Naive thymus-derived CD4-positive, alpha-beta T cell (primary cell): ENCODE measurements at regions of chr3 and their contacts with region 1.

Region 1: GRCh38 chr3:100260685-100261484 is at the start of gene TBC1D23:
- DNase-seq: peak; percentile 89 to 98 (median 96)
- ATAC-seq: peak; percentile 99
- H3K4me3 ChIP-seq: peak within 1 kb of the TSS; percentile 92
- H3K4me3 Mint-ChIP-seq: peak within 1 kb of the TSS; percentile 90 to 100 (median 94)
- H3K27ac ChIP-seq: peak within 1 kb of the TSS; percentile 89
- H3K27ac Mint-ChIP-seq: peak within 1 kb of the TSS; percentile 97 to 100 (median 99)
- H3K4me1 ChIP-seq: peaks cover 10 to 20% of the 10 kb centered on the region in 2 donors
- H3K4me1 Mint-ChIP-seq: peaks cover 37 to 75% (median 65%) of the 10 kb centered on the region in 7 donors
- H3K27me3 ChIP-seq: no peaks in the 10 kb centered on the region
- H3K27me3 Mint-ChIP-seq: no peaks in the 10 kb centered on the region
- total RNA-seq, gene TBC1D23: 30.8 to 42.4 (median 33.9) TPM

Region 2: DNA sequence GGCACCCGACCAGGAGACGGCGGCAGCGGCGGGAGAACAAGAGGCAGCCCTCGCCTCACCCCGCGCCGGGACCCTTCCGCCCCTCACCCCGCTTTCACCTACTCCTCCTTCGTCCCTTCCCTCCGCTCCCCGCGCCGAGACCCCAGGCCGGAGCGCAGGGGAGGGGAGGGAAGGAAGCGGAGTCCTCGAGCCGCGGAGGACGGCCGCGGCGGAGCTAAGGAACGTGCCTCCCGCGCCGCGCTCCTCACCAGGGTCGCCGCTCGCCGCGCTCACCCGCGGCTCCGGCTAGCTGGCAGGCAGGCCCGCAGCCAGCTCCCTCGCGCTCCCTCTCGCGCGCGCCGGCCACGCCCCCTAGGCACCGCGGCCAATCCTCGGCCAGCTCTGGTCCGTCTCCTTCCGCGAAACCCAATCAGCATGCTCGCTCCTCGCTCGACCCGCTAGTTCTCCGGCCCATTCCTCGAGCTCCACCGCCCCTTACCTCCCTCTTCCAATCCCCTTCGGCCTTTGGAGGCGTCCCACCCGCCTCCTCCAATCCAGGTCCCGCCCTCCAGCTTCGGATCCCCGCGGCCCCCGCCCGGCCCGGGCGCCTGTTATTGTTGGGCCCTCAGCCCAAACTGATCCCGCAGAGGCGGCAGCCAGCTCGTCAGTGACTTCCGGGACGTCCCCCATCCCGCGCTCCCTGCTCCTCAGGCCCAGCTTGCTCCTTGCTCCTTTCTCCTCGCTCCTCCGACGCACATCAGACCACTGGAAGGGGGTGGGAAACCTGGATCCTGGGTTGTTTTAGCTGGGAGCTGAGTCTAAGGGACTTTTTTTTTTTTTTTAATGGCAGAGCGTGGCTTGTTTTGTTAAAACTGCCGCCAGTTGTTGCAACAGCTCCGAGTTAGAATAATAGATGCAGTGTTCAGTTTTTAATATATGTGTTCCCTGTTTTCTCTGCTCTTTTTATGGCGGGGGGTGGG is 1359.2 kb before region 1 on chr3 and contains the start of gene DCBLD2:
- CTCF ChIA-PET with region 1: no interaction called
- POLR2A ChIA-PET with region 1: interaction called, 5 read pairs
- intact Hi-C with region 1: loop called (anchors 5 kb)
- DNase-seq: peak; percentile 90 to 96 (median 94)
- ATAC-seq: peak; percentile 99
- H3K4me3 ChIP-seq: peak within 1 kb of the TSS; percentile 86
- H3K4me3 Mint-ChIP-seq: peak within 1 kb of the TSS; percentile 89 to 97 (median 94)
- H3K27ac ChIP-seq: peak within 1 kb of the TSS; percentile 78
- H3K27ac Mint-ChIP-seq: peak within 1 kb of the TSS; percentile 44 to 96 (median 86)
- H3K4me1 ChIP-seq: peaks cover 5% of the 10 kb centered on the region in 2 donors
- H3K4me1 Mint-ChIP-seq: peaks cover 14 to 27% (median 22%) of the 10 kb centered on the region in 7 donors
- H3K27me3 ChIP-seq: no peaks in the 10 kb centered on the region
- H3K27me3 Mint-ChIP-seq: peaks cover 0 to 30% (median 8%) of the 10 kb centered on the region in 5 donors
- total RNA-seq, gene DCBLD2: 1.9 to 4.7 (median 2.9) TPM

Region 3: GRCh38 chr3:99817437-99818240 is 443.2 kb before region 1 on chr3 and contains the start of gene CMSS1:
- CTCF ChIA-PET with region 1: no interaction called
- POLR2A ChIA-PET with region 1: interaction called, 9 read pairs
- intact Hi-C with region 1: loop called (anchors 1 kb)
- DNase-seq: peak; percentile 96 to 98 (median 97)
- ATAC-seq: peak; percentile 94
- H3K4me3 ChIP-seq: peak within 1 kb of the TSS; percentile 80
- H3K4me3 Mint-ChIP-seq: peak within 1 kb of the TSS; percentile 84 to 99 (median 95)
- H3K27ac ChIP-seq: peak within 1 kb of the TSS; percentile 90
- H3K27ac Mint-ChIP-seq: peak within 1 kb of the TSS; percentile 93 to 100 (median 100)
- H3K4me1 ChIP-seq: peaks cover 18 to 22% of the 10 kb centered on the region in 2 donors
- H3K4me1 Mint-ChIP-seq: peaks cover 19 to 62% (median 41%) of the 10 kb centered on the region in 7 donors
- H3K27me3 ChIP-seq: no peaks in the 10 kb centered on the region
- H3K27me3 Mint-ChIP-seq: no peaks in the 10 kb centered on the region
- total RNA-seq, gene CMSS1: 14.9 to 47.7 (median 18.2) TPM

Region 4: DNA sequence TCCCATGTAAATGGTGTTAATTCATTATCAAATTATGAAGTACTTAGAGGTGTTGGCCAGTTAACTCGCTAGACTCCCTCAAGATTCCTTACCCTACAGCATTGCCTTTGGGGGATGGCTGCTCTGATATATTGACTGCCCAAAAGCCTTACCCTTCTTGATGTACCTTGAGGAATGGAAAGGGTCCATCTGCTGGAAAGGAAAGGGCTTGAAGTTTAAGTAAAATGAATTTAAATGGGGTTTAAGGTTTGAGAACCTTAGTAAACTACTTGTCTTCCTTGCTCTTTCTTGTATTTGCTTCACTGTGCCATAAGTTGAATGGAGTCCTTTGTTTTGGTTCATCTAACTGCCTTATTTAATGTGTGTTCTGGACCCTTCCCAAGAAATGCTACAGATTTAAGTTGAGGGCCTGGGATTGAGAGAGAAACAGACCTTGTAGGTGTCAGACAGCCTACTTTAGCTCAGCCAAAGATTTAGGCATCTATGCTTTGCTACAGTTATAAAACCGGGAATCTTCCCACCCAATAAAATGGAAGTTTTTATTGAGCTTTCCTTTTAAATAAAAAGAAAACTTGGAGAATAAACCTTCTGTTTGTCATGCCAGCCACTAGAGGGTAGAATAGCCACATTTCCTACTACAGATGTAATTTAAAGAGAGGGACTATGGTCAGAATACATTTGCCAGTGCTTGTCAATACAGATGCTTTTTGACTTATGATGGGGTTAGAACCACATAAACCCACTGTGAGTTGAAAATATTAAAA is 417.9 kb before region 1 on chr3:
- CTCF ChIA-PET with region 1: no interaction called
- POLR2A ChIA-PET with region 1: no interaction called
- intact Hi-C with region 1: loop called in 1 of 2 experiments (anchors 1 kb)
- DNase-seq: no peak
- ATAC-seq: peak; percentile 51
- H3K4me3 ChIP-seq: no peak overlapping the region
- H3K4me3 Mint-ChIP-seq: no peak overlapping the region
- H3K27ac ChIP-seq: no peak overlapping the region
- H3K27ac Mint-ChIP-seq: no peak overlapping the region
- H3K4me1 ChIP-seq: no peaks in the 10 kb centered on the region
- H3K4me1 Mint-ChIP-seq: peaks cover 0 to 27% (median 9%) of the 10 kb centered on the region in 7 donors
- H3K27me3 ChIP-seq: no peaks in the 10 kb centered on the region
- H3K27me3 Mint-ChIP-seq: no peaks in the 10 kb centered on the region

Region 5: DNA sequence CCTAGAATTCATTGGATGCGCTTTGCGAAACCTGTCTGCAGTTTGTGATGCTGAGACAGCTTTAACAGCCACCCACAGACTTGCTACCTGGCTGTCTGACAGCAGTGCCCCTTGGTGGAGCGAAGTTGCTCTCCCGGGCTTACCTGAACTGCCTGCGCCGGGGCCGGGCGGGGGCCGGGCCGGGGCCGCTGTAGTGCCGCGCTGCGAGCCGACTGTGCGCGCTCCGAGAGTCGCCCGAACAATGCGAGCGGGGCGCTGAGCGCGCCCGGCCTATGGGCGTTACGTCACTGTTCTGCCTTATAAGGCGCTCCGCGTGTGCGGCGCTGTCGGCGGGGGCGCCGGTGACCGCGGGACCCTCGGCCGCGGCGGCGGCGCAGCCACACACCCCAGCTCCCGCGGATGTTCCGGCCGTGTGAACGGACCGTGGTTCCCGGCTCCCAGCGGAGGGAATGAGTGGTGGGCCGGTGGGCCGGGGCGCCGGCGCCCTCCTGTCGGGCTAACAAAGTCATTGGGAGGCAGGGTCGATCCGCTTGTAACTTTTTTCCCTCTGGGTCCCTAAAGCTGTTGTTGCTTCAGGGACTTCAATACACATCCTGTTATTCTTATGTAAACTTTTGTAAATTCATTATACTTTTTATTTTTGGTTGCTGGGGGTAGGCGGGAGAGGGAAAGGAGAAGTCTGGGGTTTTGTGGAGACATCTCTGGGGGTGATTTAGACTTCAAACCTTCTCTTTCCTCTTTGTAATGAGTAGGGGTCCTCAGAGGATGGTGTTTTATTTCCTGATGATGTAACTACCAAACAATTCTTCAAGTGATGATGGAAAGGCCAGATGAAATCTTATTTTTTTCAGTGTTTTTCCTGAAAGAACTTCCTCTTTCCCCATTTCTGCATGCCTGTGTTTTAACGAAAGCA is 384.7 kb before region 1 on chr3:
- CTCF ChIA-PET with region 1: no interaction called
- POLR2A ChIA-PET with region 1: no interaction called
- intact Hi-C with region 1: loop called in 1 of 2 experiments (anchors 1 kb)
- DNase-seq: peak; percentile 60 to 74 (median 67)
- ATAC-seq: peak; percentile 97
- H3K4me3 ChIP-seq: peak overlapping the region; percentile 56
- H3K4me3 Mint-ChIP-seq: peak overlapping the region; percentile 76 to 87 (median 82)
- H3K27ac ChIP-seq: peak overlapping the region; percentile 59
- H3K27ac Mint-ChIP-seq: peak overlapping the region in 8 of 9 donors; percentile 30 to 86 (median 60)
- H3K4me1 ChIP-seq: peaks cover 10 to 14% of the 10 kb centered on the region in 2 donors
- H3K4me1 Mint-ChIP-seq: peaks cover 3 to 41% (median 17%) of the 10 kb centered on the region in 7 donors
- H3K27me3 ChIP-seq: peaks cover 0 to 6% of the 10 kb centered on the region in 2 donors
- H3K27me3 Mint-ChIP-seq: peaks cover 0 to 48% (median 0%) of the 10 kb centered on the region in 5 donors

Region 6: DNA sequence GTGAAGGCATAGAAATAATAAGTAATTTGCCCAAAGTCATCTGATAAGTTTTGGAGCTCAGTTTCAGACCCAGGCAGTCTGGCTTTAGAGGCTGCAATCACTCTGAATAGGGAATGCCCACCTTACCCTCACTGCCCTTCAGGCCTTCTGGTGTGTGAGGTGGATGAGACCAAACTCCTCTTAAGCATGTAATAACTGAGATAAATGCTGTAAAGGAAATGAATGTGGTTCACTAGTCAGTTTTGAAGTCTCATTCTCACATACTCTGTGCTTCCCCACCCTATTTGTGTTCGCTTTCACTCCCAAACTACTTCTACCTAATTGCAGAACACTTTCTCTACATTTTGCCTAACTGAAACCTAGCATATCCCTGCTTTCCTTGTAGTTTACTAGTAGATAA is 290.7 kb before region 1 on chr3:
- CTCF ChIA-PET with region 1: no interaction called
- POLR2A ChIA-PET with region 1: no interaction called
- intact Hi-C with region 1: no loop called
- DNase-seq: no peak
- ATAC-seq: no peak
- H3K4me3 ChIP-seq: no peak overlapping the region
- H3K4me3 Mint-ChIP-seq: peak overlapping the region in 1 of 10 donors; percentile 27
- H3K27ac ChIP-seq: no peak overlapping the region
- H3K27ac Mint-ChIP-seq: peak overlapping the region in 1 of 9 donors; percentile 48
- H3K4me1 ChIP-seq: no peaks in the 10 kb centered on the region
- H3K4me1 Mint-ChIP-seq: peaks cover 11 to 25% (median 20%) of the 10 kb centered on the region in 7 donors
- H3K27me3 ChIP-seq: no peaks in the 10 kb centered on the region
- H3K27me3 Mint-ChIP-seq: no peaks in the 10 kb centered on the region

Region 7: DNA sequence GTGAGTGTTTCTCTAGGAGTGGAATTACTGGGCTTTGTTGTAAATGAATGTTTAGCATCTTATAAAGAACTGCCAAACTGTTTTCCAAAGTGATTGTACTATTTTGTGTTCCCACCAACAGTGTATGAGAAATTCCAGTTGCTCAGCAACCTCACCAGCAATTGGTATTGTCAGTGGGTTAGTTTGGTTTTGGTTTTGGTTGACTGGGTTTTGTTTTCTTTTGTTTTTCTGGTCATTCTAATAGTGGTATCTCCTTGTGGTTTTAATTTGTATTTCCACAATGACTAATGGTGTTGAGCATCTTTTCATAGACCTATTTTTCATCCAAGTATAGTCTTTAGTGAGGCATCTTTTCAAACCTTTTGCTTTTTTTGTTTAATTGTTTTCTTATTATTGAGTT is 173.7 kb before region 1 on chr3:
- CTCF ChIA-PET with region 1: no interaction called
- POLR2A ChIA-PET with region 1: no interaction called
- intact Hi-C with region 1: no loop called
- DNase-seq: no peak
- ATAC-seq: peak; percentile 27
- H3K4me3 ChIP-seq: no peak overlapping the region
- H3K4me3 Mint-ChIP-seq: no peak overlapping the region
- H3K27ac ChIP-seq: no peak overlapping the region
- H3K27ac Mint-ChIP-seq: peak overlapping the region in 1 of 9 donors; percentile 54
- H3K4me1 ChIP-seq: no peaks in the 10 kb centered on the region
- H3K4me1 Mint-ChIP-seq: peaks cover 0 to 49% (median 0%) of the 10 kb centered on the region in 7 donors
- H3K27me3 ChIP-seq: no peaks in the 10 kb centered on the region
- H3K27me3 Mint-ChIP-seq: peaks cover 0 to 3% (median 0%) of the 10 kb centered on the region in 5 donors

Region 8: GRCh38 chr3:100210772-100211135 is 50.1 kb before region 1 on chr3:
- CTCF ChIA-PET with region 1: no interaction called
- POLR2A ChIA-PET with region 1: no interaction called
- intact Hi-C with region 1: loop called in 1 of 2 experiments (anchors 1 kb)
- DNase-seq: peak in 4 of 9 donors; percentile 1 to 25 (median 11)
- ATAC-seq: peak; percentile 54
- H3K4me3 ChIP-seq: no peak overlapping the region
- H3K4me3 Mint-ChIP-seq: peak overlapping the region in 6 of 10 donors; percentile 45 to 75 (median 64)
- H3K27ac ChIP-seq: no peak overlapping the region
- H3K27ac Mint-ChIP-seq: peak overlapping the region in 6 of 9 donors; percentile 41 to 92 (median 86)
- H3K4me1 ChIP-seq: peaks cover 10 to 12% of the 10 kb centered on the region in 2 donors
- H3K4me1 Mint-ChIP-seq: peaks cover 10 to 32% (median 16%) of the 10 kb centered on the region in 7 donors
- H3K27me3 ChIP-seq: no peaks in the 10 kb centered on the region
- H3K27me3 Mint-ChIP-seq: peaks cover 0 to 5% (median 0%) of the 10 kb centered on the region in 5 donors

Region 9: GRCh38 chr3:100334488-100335351 is 73.8 kb after region 1 on chr3 and contains the start of gene NIT2:
- CTCF ChIA-PET with region 1: interaction called, 3 read pairs
- POLR2A ChIA-PET with region 1: interaction called, 3 read pairs
- intact Hi-C with region 1: loop called (anchors 1 to 2 kb)
- DNase-seq: peak; percentile 49 to 79 (median 65)
- ATAC-seq: peak; percentile 97
- H3K4me3 ChIP-seq: peak within 1 kb of the TSS; percentile 72
- H3K4me3 Mint-ChIP-seq: peak within 1 kb of the TSS; percentile 86 to 99 (median 94)
- H3K27ac ChIP-seq: peak within 1 kb of the TSS; percentile 76
- H3K27ac Mint-ChIP-seq: peak within 1 kb of the TSS; percentile 87 to 97 (median 93)
- H3K4me1 ChIP-seq: peaks cover 8 to 12% of the 10 kb centered on the region in 2 donors
- H3K4me1 Mint-ChIP-seq: peaks cover 11 to 40% (median 30%) of the 10 kb centered on the region in 7 donors
- H3K27me3 ChIP-seq: no peaks in the 10 kb centered on the region
- H3K27me3 Mint-ChIP-seq: no peaks in the 10 kb centered on the region
- total RNA-seq, gene NIT2: 25.3 to 51.6 (median 30.6) TPM

Region 10: DNA sequence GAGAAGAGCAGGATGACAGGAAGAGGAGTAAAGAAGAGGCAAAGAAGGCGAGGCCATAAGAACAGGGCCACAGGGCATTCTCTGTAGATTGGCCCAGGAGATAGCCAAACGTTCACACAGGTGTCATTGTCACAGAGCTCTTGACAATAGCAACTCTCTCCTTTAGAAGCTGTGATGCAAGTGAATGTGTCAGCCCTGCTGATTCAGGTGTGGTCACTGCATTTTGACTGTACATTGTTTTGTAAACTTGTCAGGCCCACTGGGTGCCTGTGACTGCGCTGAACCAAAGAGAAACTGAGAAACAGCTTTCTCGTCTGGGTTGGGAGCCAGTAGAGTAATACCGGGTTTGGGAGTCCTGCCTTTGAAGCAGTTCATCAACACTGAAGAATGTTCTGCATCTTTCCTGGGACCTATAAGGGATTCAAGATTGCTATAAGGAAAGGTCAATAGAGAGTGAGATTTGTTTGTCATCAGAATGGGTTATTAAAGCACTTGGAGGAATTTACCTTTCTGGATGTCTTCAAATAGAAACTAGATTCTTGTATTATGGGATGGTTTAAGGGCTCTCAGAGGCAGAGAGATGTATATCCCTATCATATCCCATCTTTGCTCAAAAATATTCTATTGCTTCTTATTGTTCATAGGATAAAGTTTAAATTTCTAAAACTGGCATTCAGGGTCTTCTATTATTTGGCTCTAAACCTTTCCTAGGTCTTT is 276.9 kb after region 1 on chr3:
- CTCF ChIA-PET with region 1: no interaction called
- POLR2A ChIA-PET with region 1: no interaction called
- intact Hi-C with region 1: no loop called
- DNase-seq: no peak
- ATAC-seq: no peak
- H3K4me3 ChIP-seq: no peak overlapping the region
- H3K4me3 Mint-ChIP-seq: no peak overlapping the region
- H3K27ac ChIP-seq: no peak overlapping the region
- H3K27ac Mint-ChIP-seq: no peak overlapping the region
- H3K4me1 ChIP-seq: no peaks in the 10 kb centered on the region
- H3K4me1 Mint-ChIP-seq: no peaks in the 10 kb centered on the region
- H3K27me3 ChIP-seq: no peaks in the 10 kb centered on the region
- H3K27me3 Mint-ChIP-seq: peaks cover 0 to 12% (median 6%) of the 10 kb centered on the region in 5 donors

Region 11: GRCh38 chr3:100740207-100740606 is 479.3 kb after region 1 on chr3:
- CTCF ChIA-PET with region 1: no interaction called
- POLR2A ChIA-PET with region 1: no interaction called
- intact Hi-C with region 1: no loop called
- DNase-seq: no peak
- ATAC-seq: no peak
- H3K4me3 ChIP-seq: no peak overlapping the region
- H3K4me3 Mint-ChIP-seq: no peak overlapping the region
- H3K27ac ChIP-seq: no peak overlapping the region
- H3K27ac Mint-ChIP-seq: no peak overlapping the region
- H3K4me1 ChIP-seq: no peaks in the 10 kb centered on the region
- H3K4me1 Mint-ChIP-seq: peaks cover 0 to 11% (median 4%) of the 10 kb centered on the region in 7 donors
- H3K27me3 ChIP-seq: no peaks in the 10 kb centered on the region
- H3K27me3 Mint-ChIP-seq: no peaks in the 10 kb centered on the region